ENCODE measurements at regions of chr18 and their contacts with region 1.

Region 1: GRCh38 chr18:58922995-58923394 is 58.3 kb downstream of the ZNF532 start:
- DNase-seq: no peak
- H3K4me3 ChIP-seq: no peak overlapping the region
- H3K27ac ChIP-seq: no peak overlapping the region
- H3K4me1 ChIP-seq: no peaks in the 10 kb centered on the region
- H3K27me3 ChIP-seq: no peaks in the 10 kb centered on the region
- CTCF ChIP-seq: no peak

Region 2: GRCh38 chr18:58847383-58848071 is 75.5 kb before region 1 on chr18:
- CTCF ChIA-PET with region 1: no interaction called
- dilution Hi-C with region 1: loop called (anchors 5 kb)
- in situ Hi-C with region 1: no loop called
- intact Hi-C with region 1: no loop called
- DNase-seq: no peak
- H3K4me3 ChIP-seq: no peak overlapping the region
- H3K27ac ChIP-seq: no peak overlapping the region
- H3K4me1 ChIP-seq: peaks cover 13% of the 10 kb centered on the region
- H3K27me3 ChIP-seq: no peaks in the 10 kb centered on the region
- CTCF ChIP-seq: no peak